Dendritic cell treated with granulocyte-macrophage colony-stimulating factor and Interleukin-4, amounts not matched to agents 40 ng/mL and 50 ng/mL, for 4 days (primary cell): ENCODE measurements at regions of chr10 and their contacts with region 1.

Region 1: DNA sequence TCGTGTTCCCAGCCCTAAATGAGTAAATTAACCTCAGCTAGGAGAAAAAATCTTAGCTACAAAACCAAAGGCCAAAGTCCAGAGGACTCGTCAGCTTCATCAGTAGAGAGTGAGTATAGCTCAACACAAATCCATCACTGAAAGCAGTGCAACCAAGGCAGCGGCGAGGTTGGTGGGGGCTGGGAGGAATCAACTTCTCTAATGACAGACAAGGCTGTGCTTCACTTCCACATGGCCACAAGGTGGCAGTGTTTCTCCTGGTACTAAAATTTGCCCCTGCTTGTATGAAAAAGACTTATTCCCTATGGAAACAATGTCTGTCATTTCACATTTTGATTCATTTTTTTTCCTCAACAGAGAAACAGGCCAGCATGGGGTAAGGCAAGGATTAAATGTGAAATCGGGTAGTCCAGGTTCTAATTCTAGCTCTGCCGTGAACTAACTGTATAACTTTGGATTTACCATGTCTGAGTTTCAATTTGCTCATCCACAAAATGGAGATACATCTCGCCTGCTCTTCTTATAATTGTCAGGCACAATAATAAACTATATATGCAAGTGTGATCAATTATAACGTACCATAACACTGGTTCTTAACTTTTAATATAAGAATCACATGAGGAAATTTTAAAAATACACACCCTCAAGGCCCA is 39.3 kb downstream of the FAS start:
- H3K4me3 Mint-ChIP-seq: no peak overlapping the region
- H3K27ac Mint-ChIP-seq: no peak overlapping the region
- H3K4me1 Mint-ChIP-seq: peaks cover 46% of the 10 kb centered on the region
- H3K27me3 Mint-ChIP-seq: peaks cover 5% of the 10 kb centered on the region

Region 2: DNA sequence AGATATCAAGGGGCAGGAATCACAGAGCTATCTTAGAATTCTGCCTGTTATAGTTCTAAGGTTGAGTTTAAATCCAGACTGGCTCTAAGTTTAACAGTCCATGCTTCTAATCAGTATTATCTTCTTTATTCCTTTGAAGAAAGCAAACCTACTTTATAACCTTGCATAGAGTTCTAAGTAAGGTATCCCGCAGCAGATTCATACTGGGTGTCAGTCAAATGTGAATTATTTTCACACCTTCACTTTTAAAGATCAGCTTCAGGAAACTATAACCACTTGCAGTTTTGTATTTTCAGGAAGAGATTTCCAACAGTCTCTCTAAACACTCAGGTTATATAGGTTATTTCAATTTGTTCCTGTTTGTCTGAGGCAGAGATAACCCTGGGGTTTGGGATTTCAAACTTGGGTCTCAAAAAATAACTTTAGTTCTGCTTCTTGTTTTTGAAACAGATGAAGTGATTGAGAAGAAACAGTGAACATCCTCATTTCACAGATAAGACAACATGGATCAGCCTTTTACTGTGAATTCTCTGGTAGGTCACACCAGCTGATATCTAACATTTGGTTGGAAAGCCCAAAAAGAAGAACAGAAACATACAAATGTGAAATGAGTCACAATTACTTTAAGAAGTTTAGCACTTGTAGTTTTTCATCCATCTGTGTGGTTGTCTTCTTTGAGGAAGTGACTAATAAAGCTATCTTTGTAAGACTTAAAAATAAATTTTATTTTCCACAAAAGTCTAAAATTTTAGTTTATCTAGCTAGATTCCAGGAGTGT is 128.5 kb before region 1 on chr10:
- intact Hi-C with region 1: no loop called
- H3K4me3 Mint-ChIP-seq: no peak overlapping the region
- H3K27ac Mint-ChIP-seq: peak overlapping the region; percentile 92
- H3K4me1 Mint-ChIP-seq: peaks cover 40% of the 10 kb centered on the region
- H3K27me3 Mint-ChIP-seq: no peaks in the 10 kb centered on the region

Region 3: GRCh38 chr10:89086801-89087521 is 57.0 kb after region 1 on chr10:
- intact Hi-C with region 1: loop called (anchors 2 kb)
- H3K4me3 Mint-ChIP-seq: no peak overlapping the region
- H3K27ac Mint-ChIP-seq: no peak overlapping the region
- H3K4me1 Mint-ChIP-seq: peaks cover 27% of the 10 kb centered on the region
- H3K27me3 Mint-ChIP-seq: no peaks in the 10 kb centered on the region

Region 4: GRCh38 chr10:89122433-89123051 is 92.6 kb after region 1 on chr10:
- intact Hi-C with region 1: loop called (anchors 2 kb)
- H3K4me3 Mint-ChIP-seq: no peak overlapping the region
- H3K27ac Mint-ChIP-seq: peak overlapping the region; percentile 93
- H3K4me1 Mint-ChIP-seq: peaks cover 53% of the 10 kb centered on the region
- H3K27me3 Mint-ChIP-seq: peaks cover 5% of the 10 kb centered on the region

Region 5: GRCh38 chr10:89163265-89163995 is 133.5 kb after region 1 on chr10:
- intact Hi-C with region 1: loop called (anchors 5 kb)
- H3K4me3 Mint-ChIP-seq: peak overlapping the region; percentile 33
- H3K27ac Mint-ChIP-seq: peak overlapping the region; percentile 77
- H3K4me1 Mint-ChIP-seq: peaks cover 31% of the 10 kb centered on the region
- H3K27me3 Mint-ChIP-seq: peaks cover 9% of the 10 kb centered on the region

Region 6: DNA sequence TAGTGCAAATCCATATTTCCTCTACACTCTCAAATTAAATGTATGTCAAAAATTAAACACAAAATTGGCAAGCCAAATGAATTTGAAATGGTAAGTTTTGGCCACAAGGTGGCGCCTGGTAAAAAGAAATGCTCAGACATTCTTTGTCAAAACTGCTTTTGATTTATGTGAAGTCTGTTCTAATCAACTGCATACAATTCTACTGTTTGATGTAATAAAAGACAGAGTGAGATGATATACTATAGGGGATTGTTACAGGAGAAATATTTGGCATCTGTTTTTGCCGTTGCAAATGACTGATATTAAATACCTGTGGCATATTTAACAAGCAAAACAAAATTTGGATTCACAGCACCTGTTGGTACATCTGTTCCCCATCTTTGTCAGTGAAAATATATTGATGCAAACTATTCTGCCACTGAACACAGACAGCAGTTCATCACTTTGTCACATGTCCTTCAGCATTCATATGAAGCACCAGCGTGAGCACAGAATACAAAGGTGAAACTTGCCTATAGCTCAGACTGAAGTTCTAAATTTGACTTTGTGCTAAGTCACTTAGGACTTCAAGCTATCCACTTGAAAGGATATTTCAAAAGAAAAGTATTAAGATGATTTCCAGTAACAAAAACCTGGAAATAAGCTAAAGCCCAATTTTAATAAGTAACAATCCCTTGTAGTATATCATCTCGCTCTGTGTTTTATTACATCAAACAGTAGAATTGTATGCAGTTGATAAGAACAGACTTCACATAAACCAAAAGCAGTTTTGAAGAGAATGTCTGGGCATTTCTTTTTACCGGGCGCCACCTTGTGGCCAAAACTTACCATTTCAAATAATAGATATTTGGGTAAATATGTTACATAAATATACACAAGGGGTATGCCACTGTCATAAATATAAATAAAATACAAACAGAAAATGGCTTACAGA is 187.4 kb after region 1 on chr10:
- intact Hi-C with region 1: loop called (anchors 1 kb)
- H3K4me3 Mint-ChIP-seq: no peak overlapping the region
- H3K27ac Mint-ChIP-seq: no peak overlapping the region
- H3K4me1 Mint-ChIP-seq: peaks cover 25% of the 10 kb centered on the region
- H3K27me3 Mint-ChIP-seq: peaks cover 1% of the 10 kb centered on the region